Heart right ventricle (tissue), 16 donors: ENCODE measurements at regions of chr16 and their contacts with region 1.

Region 1: DNA sequence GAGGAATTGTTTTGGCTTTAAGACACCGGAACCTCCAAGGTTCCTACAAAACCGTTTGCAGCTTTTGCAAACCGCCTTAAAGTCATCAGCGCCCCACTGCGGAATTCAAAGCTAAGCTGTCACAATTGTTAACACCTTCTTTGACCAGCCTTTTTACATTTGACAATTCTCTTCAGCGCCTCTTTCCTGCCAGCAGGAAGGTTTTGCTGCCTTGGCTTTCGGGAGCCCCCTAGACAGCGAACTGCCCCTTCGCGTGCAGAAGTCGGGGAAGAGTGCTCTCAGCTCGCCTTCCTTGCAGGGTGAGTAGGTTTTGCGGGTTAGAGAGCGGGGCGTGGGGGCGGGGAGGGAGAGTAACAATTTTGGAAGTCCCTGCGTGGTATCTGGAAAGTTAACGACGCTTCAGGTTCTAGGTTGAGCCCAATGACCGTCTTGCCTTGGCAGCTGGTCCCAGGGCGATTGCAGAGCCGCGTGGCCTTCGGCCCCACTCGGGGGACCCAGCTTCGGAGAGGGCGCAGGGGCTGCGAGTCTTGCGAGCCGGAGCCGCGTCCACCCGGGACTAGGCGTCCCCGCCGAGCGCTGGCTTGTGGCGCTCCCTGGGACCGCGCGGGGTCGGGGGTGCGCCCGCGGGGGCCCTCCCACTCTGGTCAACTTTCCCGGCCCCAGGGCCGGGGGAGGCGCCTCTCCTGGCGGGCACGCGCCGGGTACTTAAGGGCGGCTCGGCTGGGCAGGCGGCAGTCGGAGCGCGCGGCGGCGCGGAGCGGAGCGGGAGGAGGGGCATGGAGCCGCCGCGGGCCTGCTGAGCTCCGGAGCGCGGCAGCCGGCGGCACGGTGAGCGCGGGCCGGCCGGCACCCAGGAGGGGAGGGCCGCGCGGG is at the start of gene HAS3:
- DNase-seq: peak in 1 of 2 donors; percentile 52
- ATAC-seq: peak; percentile 63 to 86 (median 75)
- H3K4me3 ChIP-seq: peak within 1 kb of the TSS; percentile 36 to 79 (median 58)
- H3K27ac ChIP-seq: peak within 1 kb of the TSS in 2 of 10 donors; percentile 12 to 21
- H3K4me1 ChIP-seq: peaks cover 7 to 34% (median 31%) of the 10 kb centered on the region in 9 donors
- H3K27me3 ChIP-seq: peaks cover 0 to 47% (median 0%) of the 10 kb centered on the region in 7 donors
- CTCF ChIP-seq: peak in 6 of 9 donors; percentile 15 to 49 (median 37)
- total RNA-seq, gene HAS3: 0.15 to 1.8 (median 0.38) TPM

Region 2: GRCh38 chr16:68907781-68908181 is 197.9 kb before region 1 on chr16:
- intact Hi-C with region 1: loop called in 1 of 10 experiments (anchors 5 kb)
- DNase-seq: no peak
- ATAC-seq: no peak
- H3K4me3 ChIP-seq: no peak overlapping the region
- H3K27ac ChIP-seq: no peak overlapping the region
- H3K4me1 ChIP-seq: no peaks in the 10 kb centered on the region
- H3K27me3 ChIP-seq: no peaks in the 10 kb centered on the region
- CTCF ChIP-seq: no peak

Region 3: GRCh38 chr16:68995011-68995504 is 110.7 kb before region 1 on chr16:
- intact Hi-C with region 1: loop called in 2 of 10 experiments (anchors 10 kb)
- DNase-seq: no peak
- ATAC-seq: peak in 1 of 8 donors; percentile 55
- H3K4me3 ChIP-seq: no peak overlapping the region
- H3K27ac ChIP-seq: no peak overlapping the region
- H3K4me1 ChIP-seq: peaks cover 0 to 12% (median 0%) of the 10 kb centered on the region in 9 donors
- H3K27me3 ChIP-seq: no peaks in the 10 kb centered on the region
- CTCF ChIP-seq: peak in 7 of 9 donors; percentile 15 to 38 (median 32)

Region 4: GRCh38 chr16:69209735-69210134 is 104.0 kb after region 1 on chr16:
- intact Hi-C with region 1: no loop called
- DNase-seq: no peak
- ATAC-seq: no peak
- H3K4me3 ChIP-seq: no peak overlapping the region
- H3K27ac ChIP-seq: no peak overlapping the region
- H3K4me1 ChIP-seq: peaks cover 0 to 7% (median 5%) of the 10 kb centered on the region in 9 donors
- H3K27me3 ChIP-seq: no peaks in the 10 kb centered on the region
- CTCF ChIP-seq: no peak